Heart right ventricle (tissue), 16 donors: ENCODE measurements at regions of chr2 and their contacts with region 1.

Region 1: DNA sequence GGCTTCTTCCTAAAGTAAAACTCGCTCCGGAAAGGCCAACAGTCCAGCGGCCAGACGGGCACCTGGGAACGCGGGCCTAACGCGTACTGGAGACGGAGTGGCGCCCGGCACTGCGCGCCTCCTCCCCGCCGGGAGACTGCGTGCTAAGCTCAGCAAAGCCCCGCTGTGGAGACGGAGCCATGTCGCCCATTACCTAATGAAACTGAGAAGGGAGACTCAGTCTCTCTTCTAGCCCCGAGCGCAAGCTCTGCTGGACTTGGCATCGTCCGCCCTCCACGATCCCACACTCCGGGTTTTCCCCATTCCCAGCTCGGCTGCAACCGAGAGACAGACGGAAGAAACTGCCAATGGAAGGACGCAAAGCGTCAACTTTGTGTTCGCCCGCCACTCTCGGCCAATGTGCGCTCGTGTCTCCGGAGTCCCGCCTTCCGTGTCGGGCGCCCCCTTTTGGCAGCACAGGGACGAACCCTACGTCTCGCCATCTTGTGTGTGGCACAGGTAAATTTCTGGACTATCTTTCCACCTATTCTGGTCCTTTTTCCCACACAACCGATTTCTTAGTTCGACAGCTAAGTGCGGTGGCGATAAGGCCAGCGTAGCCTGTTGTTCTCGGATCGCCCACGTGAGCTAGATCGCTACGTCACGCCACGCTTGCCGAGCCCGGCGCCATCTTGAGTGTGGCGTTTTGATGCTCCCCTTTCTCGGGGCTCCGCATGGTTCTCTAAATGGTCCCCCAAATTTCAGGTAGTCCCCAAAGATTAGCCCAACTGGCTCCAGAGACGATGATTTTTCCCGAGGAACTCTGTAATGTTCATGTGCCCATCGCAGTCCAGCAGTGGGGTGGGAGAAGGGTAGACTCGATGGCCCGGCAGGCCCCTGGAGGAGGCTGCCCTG is 1.3 kb upstream of the PTMA start:
- DNase-seq: peak; percentile 97 to 99
- ATAC-seq: peak; percentile 59 to 83 (median 76)
- H3K4me3 ChIP-seq: peak overlapping the region; percentile 36 to 100 (median 78)
- H3K27ac ChIP-seq: peak overlapping the region; percentile 98 to 100 (median 99)
- H3K4me1 ChIP-seq: peaks cover 11 to 43% (median 30%) of the 10 kb centered on the region in 9 donors
- H3K27me3 ChIP-seq: no peaks in the 10 kb centered on the region
- CTCF ChIP-seq: peak; percentile 74 to 98 (median 91)

Region 2: DNA sequence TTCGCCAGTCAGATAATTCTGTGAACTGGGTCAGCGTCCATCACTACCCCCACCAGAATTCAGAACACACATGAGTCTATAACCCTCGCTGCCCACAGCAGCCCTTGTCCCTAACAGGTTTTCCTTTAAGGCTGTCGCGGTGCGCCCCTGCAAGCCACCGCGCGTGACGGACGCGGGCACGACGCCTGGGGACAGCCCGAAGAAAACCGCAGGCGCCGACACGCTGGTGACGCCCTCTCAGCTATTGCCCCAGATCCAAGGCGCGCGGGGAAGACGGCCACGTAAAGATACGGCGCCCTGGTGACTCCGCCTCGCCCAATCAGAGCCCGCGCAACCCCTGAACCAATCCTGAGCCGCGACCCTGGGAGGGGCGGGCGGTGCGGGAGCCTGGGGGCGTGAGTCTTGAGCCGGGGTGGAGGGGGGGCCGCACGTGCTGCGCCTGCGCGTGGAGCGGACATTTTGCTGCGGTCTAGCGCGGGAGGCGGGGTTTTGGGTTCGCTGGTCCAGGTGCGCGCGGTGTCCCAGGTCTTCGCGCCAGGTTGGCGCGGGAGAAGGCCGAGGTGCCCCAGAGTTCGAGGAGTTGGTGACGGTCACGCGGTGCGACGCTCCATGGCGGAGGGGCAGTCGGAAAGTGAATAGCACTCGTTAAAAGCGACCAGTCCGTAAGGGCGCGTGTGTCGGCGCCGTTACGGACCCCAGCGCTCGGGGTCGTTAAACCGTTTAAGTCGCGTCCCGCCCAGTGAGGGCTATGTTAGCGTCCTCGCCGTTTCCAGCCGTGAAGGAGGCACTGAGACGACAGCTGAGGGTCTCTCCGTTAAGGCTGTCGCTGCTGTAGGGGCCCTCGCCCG is 192.7 kb before region 1 on chr2:
- intact Hi-C with region 1: loop called in 1 of 10 experiments (anchors 10 kb)
- DNase-seq: peak; percentile 98
- ATAC-seq: peak; percentile 99 to 100 (median 100)
- H3K4me3 ChIP-seq: peak overlapping the region; percentile 63 to 89 (median 78)
- H3K27ac ChIP-seq: peak overlapping the region; percentile 51 to 90 (median 87)
- H3K4me1 ChIP-seq: peaks cover 0 to 23% (median 12%) of the 10 kb centered on the region in 9 donors
- H3K27me3 ChIP-seq: no peaks in the 10 kb centered on the region
- CTCF ChIP-seq: no peak

Region 3: GRCh38 chr2:231604685-231605606 is 102.0 kb before region 1 on chr2:
- intact Hi-C with region 1: loop called in 1 of 10 experiments (anchors 5 kb)
- DNase-seq: peak; percentile 99 to 100
- ATAC-seq: peak; percentile 93 to 95 (median 94)
- H3K4me3 ChIP-seq: peak overlapping the region in 9 of 10 donors; percentile 40 to 69 (median 57)
- H3K27ac ChIP-seq: peak overlapping the region; percentile 95 to 100 (median 98)
- H3K4me1 ChIP-seq: peaks cover 18 to 61% (median 34%) of the 10 kb centered on the region in 9 donors
- H3K27me3 ChIP-seq: no peaks in the 10 kb centered on the region
- CTCF ChIP-seq: peak in 5 of 9 donors; percentile 6 to 43 (median 34)

Region 4: DNA sequence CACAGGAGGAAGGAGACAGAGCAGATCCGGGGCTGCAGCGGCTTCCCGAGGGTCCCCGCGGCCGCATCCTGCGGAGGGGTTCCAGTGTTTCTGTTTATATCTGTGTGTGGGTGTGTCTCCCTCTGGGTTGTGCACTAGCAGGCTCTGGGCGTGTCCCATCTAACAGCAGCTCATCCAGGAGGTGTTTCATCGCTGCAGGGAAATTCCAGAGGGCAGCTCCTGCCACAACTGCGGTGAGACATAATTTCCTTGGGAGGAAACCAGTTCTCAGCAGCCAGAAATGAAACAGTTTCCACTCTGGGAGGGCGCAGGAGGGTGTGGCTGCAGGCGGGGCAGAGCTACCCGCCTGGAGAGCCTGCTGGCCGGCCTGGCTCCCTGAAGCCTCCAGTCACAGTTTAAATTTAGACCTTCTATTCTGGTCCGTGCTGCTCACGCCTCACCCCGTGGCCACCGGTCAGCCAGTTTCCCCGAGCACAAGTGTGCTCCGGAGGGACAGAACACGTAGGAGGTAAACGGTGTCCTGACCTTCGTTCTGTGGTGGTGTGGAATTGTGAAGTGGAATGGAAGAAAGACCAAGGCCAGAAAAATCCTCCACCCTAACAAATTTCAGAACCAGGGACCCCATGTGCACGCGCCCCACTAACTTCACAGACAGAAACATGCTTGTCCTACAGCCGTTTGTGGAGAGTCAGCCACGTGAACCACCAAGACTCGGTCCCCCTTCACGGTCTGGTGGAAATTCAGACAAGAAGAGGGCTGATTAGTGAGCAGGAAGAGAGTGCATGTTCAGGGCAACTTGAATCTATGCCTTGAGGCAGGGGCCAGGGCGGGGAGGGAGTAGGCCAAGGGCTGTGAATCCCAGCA is 64.1 kb before region 1 on chr2:
- intact Hi-C with region 1: loop called in 2 of 10 experiments (anchors 2 kb)
- DNase-seq: peak; percentile 84 to 92
- ATAC-seq: peak; percentile 93 to 96 (median 94)
- H3K4me3 ChIP-seq: peak overlapping the region in 9 of 10 donors; percentile 5 to 45 (median 37)
- H3K27ac ChIP-seq: peak overlapping the region; percentile 84 to 98 (median 96)
- H3K4me1 ChIP-seq: peaks cover 35 to 72% (median 60%) of the 10 kb centered on the region in 9 donors
- H3K27me3 ChIP-seq: no peaks in the 10 kb centered on the region
- CTCF ChIP-seq: peak in 1 of 9 donors; percentile 4

Region 5: DNA sequence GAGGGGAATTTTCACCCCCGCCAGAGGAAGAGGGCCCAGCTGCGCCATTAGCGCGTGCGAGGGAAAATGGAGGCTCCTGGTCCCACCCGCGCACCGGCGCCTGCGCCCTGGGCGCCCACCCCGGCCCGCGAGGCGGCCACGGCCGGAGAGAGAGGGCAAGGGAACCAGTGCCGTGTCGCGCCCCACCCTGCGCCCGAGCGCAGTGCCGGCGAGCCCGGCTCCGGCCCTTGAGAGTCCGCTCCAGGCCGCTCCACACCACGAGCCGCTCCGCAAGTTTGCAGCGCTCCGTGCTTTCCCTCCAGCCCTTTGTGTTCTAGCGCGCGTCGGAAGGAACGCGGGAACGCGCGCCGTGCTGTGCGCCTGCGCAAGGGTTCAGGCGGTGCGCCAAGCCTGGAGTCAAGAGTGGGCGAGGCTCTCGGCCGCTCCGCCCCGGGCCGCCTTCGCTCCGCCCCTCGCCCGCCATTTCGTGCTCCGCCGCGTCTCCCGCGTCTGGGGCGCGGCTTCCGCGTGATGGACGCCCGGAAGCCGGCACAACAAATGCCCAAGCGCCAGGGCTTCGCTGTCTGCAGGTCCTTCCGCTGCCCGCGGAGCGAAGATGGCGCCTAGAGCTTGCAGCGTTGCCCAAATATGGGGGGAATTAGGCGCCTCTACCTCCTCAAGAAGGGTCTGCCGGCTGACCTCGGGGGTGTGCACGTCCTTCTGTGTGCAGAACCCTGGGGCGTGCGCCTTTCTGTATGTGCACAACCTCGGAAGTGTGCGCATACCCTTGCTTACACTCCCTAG is 44.8 kb before region 1 on chr2:
- intact Hi-C with region 1: loop called in 5 of 10 experiments (anchors 1 kb)
- DNase-seq: peak; percentile 96 to 99
- ATAC-seq: peak; percentile 72 to 83 (median 78)
- H3K4me3 ChIP-seq: peak overlapping the region in 9 of 10 donors; percentile 26 to 57 (median 51)
- H3K27ac ChIP-seq: peak overlapping the region; percentile 86 to 99 (median 96)
- H3K4me1 ChIP-seq: peaks cover 10 to 41% (median 24%) of the 10 kb centered on the region in 9 donors
- H3K27me3 ChIP-seq: no peaks in the 10 kb centered on the region
- CTCF ChIP-seq: peak in 3 of 9 donors; percentile 12 to 19 (median 15)

Region 6: DNA sequence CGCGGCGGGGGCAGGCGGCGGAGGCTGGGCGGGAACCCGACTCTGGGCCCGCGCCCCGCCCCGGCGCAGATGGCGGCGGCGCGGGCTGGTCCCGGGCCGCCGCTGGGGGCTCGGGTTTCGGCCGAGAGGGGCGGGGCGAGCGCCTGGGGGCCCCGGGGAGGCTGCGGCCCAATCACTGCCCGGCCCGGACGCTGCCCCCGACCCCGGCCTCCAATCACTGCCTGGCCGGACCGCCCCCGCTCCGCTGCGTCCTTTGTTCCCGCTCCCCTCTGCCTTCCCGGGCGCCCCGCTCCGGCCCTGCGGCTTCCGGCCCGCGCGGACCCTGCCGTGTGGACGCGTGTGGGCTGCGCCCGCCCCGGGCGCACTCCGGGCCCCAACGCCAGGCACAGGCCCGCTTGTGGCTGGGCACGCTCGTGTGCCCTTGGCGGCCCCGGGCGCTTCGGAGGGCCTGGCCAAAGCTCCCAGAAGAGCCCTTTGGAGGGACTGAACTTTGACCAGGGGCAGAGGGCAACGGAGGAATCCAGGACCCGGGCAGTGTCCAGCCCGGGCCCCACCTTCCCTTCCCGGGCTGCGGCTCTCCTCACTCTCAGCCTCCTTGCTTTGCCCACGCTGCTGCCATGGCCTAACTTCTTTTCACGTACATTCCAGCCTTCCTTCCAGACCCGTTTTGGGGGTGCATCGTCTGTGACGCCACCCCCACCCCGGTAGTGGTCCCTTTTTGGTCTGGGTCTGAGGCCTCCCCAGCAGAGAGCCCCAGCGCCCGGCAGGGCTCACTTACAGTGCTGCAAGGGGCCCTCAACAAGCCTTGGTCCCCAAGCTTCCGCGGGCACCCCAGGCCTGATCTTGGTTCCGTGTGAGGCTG is 25.8 kb before region 1 on chr2:
- intact Hi-C with region 1: loop called in 4 of 10 experiments (anchors 1 to 2 kb)
- DNase-seq: peak; percentile 90 to 91
- ATAC-seq: peak; percentile 84 to 94 (median 88)
- H3K4me3 ChIP-seq: peak overlapping the region; percentile 38 to 65 (median 54)
- H3K27ac ChIP-seq: peak overlapping the region; percentile 82 to 98 (median 93)
- H3K4me1 ChIP-seq: peaks cover 0 to 37% (median 17%) of the 10 kb centered on the region in 9 donors
- H3K27me3 ChIP-seq: no peaks in the 10 kb centered on the region
- CTCF ChIP-seq: no peak